Endothelial cell of umbilical vein (primary cell): ENCODE measurements at regions of chr1 and their contacts with region 1.

Region 1: DNA sequence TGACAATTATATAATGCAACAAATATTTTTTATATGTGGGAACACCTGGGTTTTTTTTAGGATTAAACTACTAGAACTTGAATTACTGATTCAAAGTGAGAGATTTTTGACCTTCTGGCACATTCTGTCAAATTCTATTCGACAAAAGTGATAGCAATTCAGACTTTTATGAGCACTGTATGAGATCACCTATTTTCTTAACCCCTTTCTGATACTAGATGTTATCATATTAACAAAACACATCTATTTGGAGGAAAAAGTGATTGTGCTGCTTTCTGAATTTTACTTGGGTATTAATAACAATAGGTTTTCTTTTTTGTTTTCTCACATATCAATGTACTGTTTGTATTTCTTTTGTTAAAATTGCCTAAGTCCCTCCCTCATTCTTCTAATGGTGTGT is 174.9 kb upstream of the GREM2 start:
- DNase-seq: peak; percentile 60
- H3K4me3 ChIP-seq: no peak overlapping the region
- H3K27ac ChIP-seq: peak overlapping the region; percentile 53
- H3K4me1 ChIP-seq: peaks cover 18% of the 10 kb centered on the region
- H3K27me3 ChIP-seq: no peaks in the 10 kb centered on the region
- CTCF ChIP-seq: no peak
- POLR2A ChIP-seq: no peak

Region 2: DNA sequence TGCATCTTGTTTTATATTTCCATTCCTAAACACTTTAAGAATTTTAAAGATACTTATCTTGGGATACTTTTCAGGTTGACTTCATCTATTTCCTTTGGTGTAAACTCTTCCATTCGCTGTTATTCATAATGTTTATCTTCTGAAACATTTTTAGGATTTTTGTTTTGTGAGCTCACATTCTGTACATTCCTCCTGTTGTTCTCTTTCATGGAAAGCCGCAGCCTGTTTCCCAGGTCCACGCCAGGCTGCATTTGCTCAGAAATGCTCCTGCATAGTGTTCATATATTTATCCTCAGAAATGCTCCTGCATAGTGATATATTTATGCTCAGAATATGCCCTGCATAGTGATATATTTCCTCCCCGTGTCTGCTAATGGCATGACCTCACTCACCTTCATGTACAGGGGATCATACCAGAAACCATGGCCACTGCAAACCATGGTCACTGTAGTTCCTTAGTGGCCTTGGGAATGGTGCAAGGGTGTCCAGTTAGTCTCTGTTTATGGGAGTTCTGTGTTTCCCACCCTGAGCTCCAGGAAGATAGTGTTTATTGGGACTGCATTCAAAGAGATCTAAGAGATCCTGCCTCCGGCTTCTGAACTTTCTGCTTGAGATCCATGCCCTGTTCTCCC is 21.0 kb before region 1 on chr1:
- CTCF ChIA-PET with region 1: interaction called, 4 read pairs
- POLR2A ChIA-PET with region 1: no interaction called
- dilution Hi-C with region 1: no loop called
- intact Hi-C with region 1: loop called (anchors 2 kb)
- DNase-seq: peak; percentile 75
- H3K4me3 ChIP-seq: no peak overlapping the region
- H3K27ac ChIP-seq: peak overlapping the region; percentile 89
- H3K4me1 ChIP-seq: peaks cover 20% of the 10 kb centered on the region
- H3K27me3 ChIP-seq: no peaks in the 10 kb centered on the region
- CTCF ChIP-seq: no peak
- POLR2A ChIP-seq: no peak

Region 3: DNA sequence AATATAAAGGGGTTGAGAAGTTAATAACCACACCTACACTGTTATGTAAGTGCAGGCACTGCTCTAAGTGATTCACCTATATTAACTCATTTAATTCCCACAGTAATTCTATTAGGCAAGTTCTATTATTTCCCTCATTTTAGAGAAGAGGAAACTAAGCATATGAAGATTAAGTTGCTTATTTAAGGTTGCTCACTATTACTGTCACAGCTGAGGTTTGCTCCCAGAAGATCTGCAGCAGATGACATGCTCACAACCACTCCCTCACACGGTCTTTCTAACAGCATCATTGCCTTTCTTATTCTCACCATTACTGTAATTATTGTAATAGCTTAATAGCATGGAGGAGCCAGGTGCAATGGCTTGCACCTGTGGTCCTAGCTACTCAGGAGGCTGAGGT is 21.5 kb after region 1 on chr1:
- CTCF ChIA-PET with region 1: no interaction called
- POLR2A ChIA-PET with region 1: no interaction called
- dilution Hi-C with region 1: no loop called
- intact Hi-C with region 1: no loop called
- DNase-seq: no peak
- H3K4me3 ChIP-seq: no peak overlapping the region
- H3K27ac ChIP-seq: no peak overlapping the region
- H3K4me1 ChIP-seq: peaks cover 13% of the 10 kb centered on the region
- H3K27me3 ChIP-seq: no peaks in the 10 kb centered on the region
- CTCF ChIP-seq: no peak
- POLR2A ChIP-seq: no peak